Vagina (tissue), 2 donors: ENCODE measurements at regions of chr16 and their contacts with region 1.

Region 1: GRCh38 chr16:10737068-10737625 is 6.5 kb upstream of the NUBP1 start:
- DNase-seq: peak; percentile 16 to 84
- H3K4me3 ChIP-seq: no peak overlapping the region
- H3K27ac ChIP-seq: peak overlapping the region; percentile 35
- H3K4me1 ChIP-seq: peaks cover 11% of the 10 kb centered on the region
- H3K27me3 ChIP-seq: no peaks in the 10 kb centered on the region
- CTCF ChIP-seq: peak; percentile 82 to 90 (median 85)
- POLR2A ChIP-seq: no peak

Region 2: GRCh38 chr16:10918294-10919002 is 181.3 kb after region 1 on chr16:
- intact Hi-C with region 1: loop called (anchors 2 kb)
- DNase-seq: peak in 1 of 2 donors; percentile 94
- H3K4me3 ChIP-seq: no peak overlapping the region
- H3K27ac ChIP-seq: no peak overlapping the region
- H3K4me1 ChIP-seq: peaks cover 27% of the 10 kb centered on the region
- H3K27me3 ChIP-seq: no peaks in the 10 kb centered on the region
- CTCF ChIP-seq: peak; percentile 73 to 94 (median 75)
- POLR2A ChIP-seq: no peak

Region 3: GRCh38 chr16:10937068-10937859 is 200.1 kb after region 1 on chr16:
- intact Hi-C with region 1: loop called (anchors 5 kb)
- DNase-seq: no peak
- H3K4me3 ChIP-seq: peak overlapping the region; percentile 8 to 27
- H3K27ac ChIP-seq: peak overlapping the region; percentile 17
- H3K4me1 ChIP-seq: peaks cover 75% of the 10 kb centered on the region
- H3K27me3 ChIP-seq: no peaks in the 10 kb centered on the region
- CTCF ChIP-seq: no peak
- POLR2A ChIP-seq: no peak